CD4-positive, alpha-beta T cell (primary cell): ENCODE measurements at regions of chr10 and their contacts with region 1.

Region 1: DNA sequence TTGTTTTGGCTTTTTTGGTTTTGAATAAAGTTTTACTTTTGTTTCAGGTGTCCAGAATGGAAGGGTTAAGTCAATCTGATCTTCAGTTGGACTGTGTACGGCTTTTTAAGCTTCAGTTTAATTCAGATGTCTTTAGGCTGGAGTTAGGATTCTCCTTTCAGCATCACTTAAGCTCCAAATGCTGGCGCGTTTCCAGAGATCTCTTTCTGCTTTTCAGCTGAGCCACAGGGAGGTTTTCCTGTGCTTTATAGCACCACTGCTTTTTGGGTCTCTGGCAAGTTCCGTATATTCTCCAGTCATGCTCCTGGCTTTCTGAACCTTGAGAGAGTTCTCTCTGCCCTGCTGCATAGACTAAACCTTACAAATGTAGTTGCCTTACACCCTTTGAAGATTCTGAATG is 60.0 kb downstream of the VTI1A start:
- DNase-seq: no peak
- ATAC-seq: no peak
- H3K4me3 ChIP-seq: no peak overlapping the region
- H3K4me3 Mint-ChIP-seq: no peak overlapping the region
- H3K27ac ChIP-seq: no peak overlapping the region
- H3K27ac Mint-ChIP-seq: no peak overlapping the region
- H3K4me1 ChIP-seq: no peaks in the 10 kb centered on the region
- H3K4me1 Mint-ChIP-seq: peaks cover 31% of the 10 kb centered on the region
- H3K27me3 ChIP-seq: no peaks in the 10 kb centered on the region
- H3K27me3 Mint-ChIP-seq: no peaks in the 10 kb centered on the region
- CTCF ChIP-seq: no peak

Region 2: GRCh38 chr10:112526139-112526538 is 19.1 kb after region 1 on chr10:
- CTCF ChIA-PET with region 1: interaction called, 3 read pairs
- POLR2A ChIA-PET with region 1: no interaction called
- intact Hi-C with region 1: loop called in 1 of 2 experiments (anchors 1 kb)
- DNase-seq: peak in 1 of 14 experiments; percentile 16
- ATAC-seq: no peak
- H3K4me3 ChIP-seq: no peak overlapping the region
- H3K4me3 Mint-ChIP-seq: no peak overlapping the region
- H3K27ac ChIP-seq: no peak overlapping the region
- H3K27ac Mint-ChIP-seq: no peak overlapping the region
- H3K4me1 ChIP-seq: no peaks in the 10 kb centered on the region
- H3K4me1 Mint-ChIP-seq: peaks cover 5% of the 10 kb centered on the region
- H3K27me3 ChIP-seq: no peaks in the 10 kb centered on the region
- H3K27me3 Mint-ChIP-seq: no peaks in the 10 kb centered on the region
- CTCF ChIP-seq: no peak

Region 3: DNA sequence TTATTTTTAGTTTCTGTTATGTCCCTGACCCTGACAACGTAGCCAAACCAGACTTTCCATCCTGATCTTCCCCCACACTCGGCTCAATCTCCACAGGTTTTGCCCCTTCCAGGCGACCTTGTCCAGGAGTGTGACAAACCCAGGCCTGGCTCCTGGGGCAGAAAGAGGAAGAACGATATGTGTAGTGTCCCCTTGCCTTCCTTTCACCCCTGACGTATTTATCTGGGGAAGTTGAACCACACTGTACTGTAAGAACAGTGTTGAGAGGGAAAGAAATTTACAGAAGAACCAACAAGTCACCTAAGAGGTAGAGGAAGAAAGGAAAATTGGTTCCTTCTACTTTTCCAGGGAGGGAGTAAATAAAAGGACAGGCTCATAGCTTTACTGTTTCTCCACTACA is 98.0 kb after region 1 on chr10:
- CTCF ChIA-PET with region 1: no interaction called
- POLR2A ChIA-PET with region 1: no interaction called
- intact Hi-C with region 1: no loop called
- DNase-seq: no peak
- ATAC-seq: no peak
- H3K4me3 ChIP-seq: no peak overlapping the region
- H3K4me3 Mint-ChIP-seq: no peak overlapping the region
- H3K27ac ChIP-seq: no peak overlapping the region
- H3K27ac Mint-ChIP-seq: no peak overlapping the region
- H3K4me1 ChIP-seq: no peaks in the 10 kb centered on the region
- H3K4me1 Mint-ChIP-seq: no peaks in the 10 kb centered on the region
- H3K27me3 ChIP-seq: no peaks in the 10 kb centered on the region
- H3K27me3 Mint-ChIP-seq: no peaks in the 10 kb centered on the region
- CTCF ChIP-seq: no peak